ENCODE measurements at regions of chr14 and their contacts with region 1.

Region 1: GRCh38 chr14:106013879-106014376 is 487.5 kb downstream of the TMEM121 start:
- DNase-seq: no peak
- ATAC-seq: no peak
- H3K4me3 ChIP-seq: no peak overlapping the region
- H3K4me3 Mint-ChIP-seq: no peak overlapping the region
- H3K27ac ChIP-seq: no peak overlapping the region
- H3K27ac Mint-ChIP-seq: no peak overlapping the region
- H3K4me1 ChIP-seq: peaks cover 0 to 4% of the 10 kb centered on the region in 2 donors
- H3K4me1 Mint-ChIP-seq: peaks cover 3% of the 10 kb centered on the region
- H3K27me3 ChIP-seq: no peaks in the 10 kb centered on the region
- H3K27me3 Mint-ChIP-seq: no peaks in the 10 kb centered on the region
- CTCF ChIP-seq: no peak

Region 2: GRCh38 chr14:105974902-105975301 is 39.0 kb before region 1 on chr14:
- CTCF ChIA-PET with region 1: interaction called, 7 read pairs
- POLR2A ChIA-PET with region 1: no interaction called
- intact Hi-C with region 1: loop called (anchors 5 kb)
- DNase-seq: peak; percentile 70
- ATAC-seq: peak; percentile 66
- H3K4me3 ChIP-seq: no peak overlapping the region
- H3K4me3 Mint-ChIP-seq: no peak overlapping the region
- H3K27ac ChIP-seq: no peak overlapping the region
- H3K27ac Mint-ChIP-seq: no peak overlapping the region
- H3K4me1 ChIP-seq: peaks cover 0 to 7% of the 10 kb centered on the region in 2 donors
- H3K4me1 Mint-ChIP-seq: peaks cover 6% of the 10 kb centered on the region
- H3K27me3 ChIP-seq: no peaks in the 10 kb centered on the region
- H3K27me3 Mint-ChIP-seq: no peaks in the 10 kb centered on the region
- CTCF ChIP-seq: peak; percentile 39